Posterior vena cava (tissue), 2 donors: ENCODE measurements at regions of chr12 and their contacts with region 1.

Region 1: GRCh38 chr12:130916251-130916911 is 37.3 kb upstream of the ADGRD1 start:
- DNase-seq: no peak

Region 2: DNA sequence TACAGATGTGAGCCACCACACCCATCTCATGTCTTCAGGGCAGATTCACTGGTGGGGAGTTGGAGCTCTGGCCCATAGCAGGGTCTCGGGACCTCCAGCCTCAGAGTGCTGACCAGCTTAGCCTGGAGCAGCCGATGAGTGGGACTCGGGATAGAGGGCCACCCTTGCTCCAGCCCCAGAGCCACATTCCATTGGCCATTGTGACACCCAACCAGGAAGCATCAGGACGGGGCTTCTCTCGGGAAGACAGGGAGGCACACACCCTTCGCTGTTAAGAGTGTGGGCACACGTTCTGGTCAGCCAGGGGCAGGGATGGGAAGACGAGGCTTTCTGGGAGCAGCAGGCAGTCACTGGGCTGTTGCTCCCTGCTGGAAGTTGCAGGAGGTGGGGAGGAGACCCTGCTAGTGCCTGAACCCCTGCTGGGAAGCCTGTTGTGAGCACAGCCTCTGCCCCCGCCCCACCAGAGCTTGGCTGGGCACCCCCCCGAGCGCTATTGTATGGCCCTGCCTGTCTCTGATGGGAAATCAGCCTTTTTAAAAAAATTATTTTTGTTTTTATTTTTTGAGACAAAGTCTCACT is 38.9 kb after region 1 on chr12:
- intact Hi-C with region 1: loop called in 1 of 2 experiments (anchors 5 kb)
- DNase-seq: peak; percentile 81

Region 3: DNA sequence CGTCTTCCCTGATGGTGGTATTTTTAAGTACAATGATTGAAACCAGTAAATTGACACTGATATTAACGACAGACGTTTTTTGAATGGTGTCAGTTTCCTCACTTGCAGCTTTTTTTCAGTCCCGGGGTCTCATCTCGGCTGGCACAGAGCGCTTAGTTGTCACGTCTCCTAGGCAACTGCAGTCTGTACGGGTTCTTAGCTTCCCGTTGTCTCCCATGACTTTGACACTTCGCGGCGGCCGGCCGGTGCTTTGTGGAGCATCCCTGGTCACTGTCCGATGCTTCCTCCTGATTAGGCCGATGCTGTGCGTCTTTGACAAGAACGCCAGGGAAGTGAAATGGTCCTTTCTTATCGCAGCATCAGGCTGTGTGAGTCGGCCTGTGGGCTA is 104.8 kb after region 1 on chr12:
- intact Hi-C with region 1: loop called in 1 of 2 experiments (anchors 5 kb)
- DNase-seq: no peak

Region 4: GRCh38 chr12:131132118-131132892 is 215.9 kb after region 1 on chr12:
- intact Hi-C with region 1: loop called (anchors 5 kb)
- DNase-seq: peak; percentile 90